ENCODE measurements at regions of chrX and their contacts with region 1.

Region 1: DNA sequence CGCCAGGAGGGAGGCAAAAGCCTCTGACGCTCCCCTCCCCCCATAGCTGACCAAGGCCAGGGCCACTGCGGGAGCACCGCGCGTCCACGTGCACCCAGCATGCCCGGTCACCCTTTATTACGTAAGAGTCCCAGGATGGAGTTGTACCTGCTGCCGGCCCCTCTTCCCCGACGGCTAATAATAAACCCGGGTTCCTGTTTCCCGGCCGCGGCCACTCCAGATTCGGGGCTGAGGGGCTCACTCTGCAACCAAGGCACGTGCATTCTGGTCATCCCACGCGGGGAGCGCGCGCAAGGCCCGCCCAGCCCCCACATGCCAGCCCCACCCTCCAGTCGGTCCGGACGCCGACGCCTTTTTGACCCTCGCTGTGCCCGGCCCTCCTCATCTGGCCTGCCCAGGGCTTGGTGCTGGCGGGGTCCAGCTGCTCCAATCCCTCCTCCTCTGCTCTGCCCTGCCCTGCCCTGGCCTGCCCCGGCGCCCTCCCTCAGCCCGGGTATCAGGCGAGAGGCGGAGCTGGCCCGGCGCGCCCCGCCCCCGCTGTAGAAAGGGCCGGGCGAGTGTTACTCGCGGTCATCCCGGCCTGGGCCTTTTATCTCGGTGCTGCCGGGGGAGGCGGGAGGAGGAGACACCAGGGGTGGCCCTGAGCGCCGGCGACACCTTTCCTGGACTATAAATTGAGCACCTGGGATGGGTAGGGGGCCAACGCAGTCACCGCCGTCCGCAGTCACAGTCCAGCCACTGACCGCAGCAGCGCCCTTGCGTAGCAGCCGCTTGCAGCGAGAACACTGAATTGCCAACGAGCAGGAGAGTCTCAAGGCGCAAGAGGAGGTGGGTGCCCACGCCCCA is 2.5 kb downstream of the MID1IP1 start:
- DNase-seq: peak; percentile 57 to 79
- H3K4me3 ChIP-seq: peak overlapping the region; percentile 74 to 95 (median 88)
- H3K27ac ChIP-seq: peak overlapping the region; percentile 86
- H3K4me1 ChIP-seq: peaks cover 0 to 3% (median 0%) of the 10 kb centered on the region in 4 experiments; a peak in 2 of 7 replicates
- H3K27me3 ChIP-seq: no peaks in the 10 kb centered on the region
- CTCF ChIP-seq: no peak
- EP300 ChIP-seq: peak in 1 of 2 experiments; percentile 59; a peak in 1 of 3 replicates
- POLR2A ChIP-seq: peak; percentile 70 to 93; a peak in 2 of 3 replicates
- RAD21 ChIP-seq: no peak

Region 2: GRCh38 chrX:38594434-38594833 is 209.4 kb before region 1 on chrX:
- CTCF ChIA-PET with region 1: no interaction called
- POLR2A ChIA-PET with region 1: no interaction called
- DNase-seq: no peak
- H3K4me3 ChIP-seq: no peak overlapping the region
- H3K27ac ChIP-seq: no peak overlapping the region
- H3K4me1 ChIP-seq: no peaks in the 10 kb centered on the region
- H3K27me3 ChIP-seq: no peaks in the 10 kb centered on the region
- CTCF ChIP-seq: no peak
- EP300 ChIP-seq: no peak
- POLR2A ChIP-seq: no peak
- RAD21 ChIP-seq: no peak

Region 3: GRCh38 chrX:38726597-38726996 is 77.2 kb before region 1 on chrX:
- CTCF ChIA-PET with region 1: no interaction called
- POLR2A ChIA-PET with region 1: no interaction called
- DNase-seq: no peak
- H3K4me3 ChIP-seq: no peak overlapping the region
- H3K27ac ChIP-seq: no peak overlapping the region
- H3K4me1 ChIP-seq: no peaks in the 10 kb centered on the region
- H3K27me3 ChIP-seq: no peaks in the 10 kb centered on the region
- CTCF ChIP-seq: no peak
- EP300 ChIP-seq: no peak
- POLR2A ChIP-seq: no peak
- RAD21 ChIP-seq: no peak

Region 4: DNA sequence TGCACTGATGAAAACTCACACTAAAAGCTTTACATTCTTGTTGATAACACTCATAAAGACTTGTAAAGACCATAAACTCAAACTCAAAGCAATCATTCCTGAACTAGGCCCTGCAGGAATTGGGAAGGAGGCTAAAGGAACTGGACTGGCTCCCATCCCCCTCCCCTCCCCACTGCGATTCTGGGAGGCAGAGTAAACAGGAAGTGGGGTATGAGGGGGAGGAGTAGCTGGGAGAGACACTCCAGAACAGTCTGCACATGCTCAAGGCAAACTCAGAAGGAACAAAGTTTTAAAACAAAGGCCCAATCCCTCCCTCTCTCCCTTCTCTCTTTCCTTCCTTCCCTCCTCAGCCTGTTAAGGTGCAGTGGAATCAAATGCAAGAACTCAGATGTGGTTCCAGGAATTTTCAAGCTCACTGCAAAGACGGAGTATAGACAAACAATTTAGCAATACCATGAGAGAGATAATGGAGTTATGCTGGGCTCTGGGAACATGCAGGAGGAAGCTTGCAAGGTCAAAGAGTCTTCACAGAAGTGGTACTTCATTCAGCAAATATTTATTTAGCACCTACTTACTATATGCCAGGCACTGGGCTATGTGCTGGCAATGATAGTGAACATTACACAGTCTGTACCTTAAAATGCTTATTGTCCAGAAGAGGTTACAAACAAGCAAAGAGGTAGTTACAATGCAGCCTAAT is 13.3 kb after region 1 on chrX:
- CTCF ChIA-PET with region 1: no interaction called
- POLR2A ChIA-PET with region 1: interaction called, 31 read pairs
- DNase-seq: no peak
- H3K4me3 ChIP-seq: no peak overlapping the region
- H3K27ac ChIP-seq: no peak overlapping the region
- H3K4me1 ChIP-seq: no peaks in the 10 kb centered on the region
- H3K27me3 ChIP-seq: no peaks in the 10 kb centered on the region
- CTCF ChIP-seq: no peak
- EP300 ChIP-seq: no peak
- POLR2A ChIP-seq: no peak
- RAD21 ChIP-seq: no peak

Region 5: DNA sequence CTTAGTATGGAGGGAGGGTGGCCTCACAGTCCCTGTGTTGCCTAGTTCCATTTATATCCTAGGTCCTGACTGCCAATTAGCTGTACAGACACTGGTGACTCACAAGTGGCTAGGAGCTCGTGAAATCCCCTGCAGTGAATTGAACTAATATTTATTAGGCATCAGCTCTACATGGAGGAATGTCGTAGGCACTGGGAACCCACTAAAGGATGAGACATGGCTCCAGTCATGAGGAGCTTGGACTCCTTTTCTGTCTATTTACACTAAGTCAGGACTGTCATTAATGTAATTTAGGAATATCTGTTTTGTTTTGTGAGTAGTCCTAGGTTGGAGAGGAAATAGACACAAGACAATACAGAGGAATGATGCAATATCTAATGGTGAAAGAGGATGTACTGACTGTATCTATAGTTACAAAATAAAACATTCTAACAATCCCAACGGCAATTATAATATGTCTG is 65.2 kb after region 1 on chrX:
- CTCF ChIA-PET with region 1: interaction called, 4 read pairs
- POLR2A ChIA-PET with region 1: interaction called, 64 read pairs
- DNase-seq: no peak
- H3K4me3 ChIP-seq: no peak overlapping the region
- H3K27ac ChIP-seq: no peak overlapping the region
- H3K4me1 ChIP-seq: peaks cover 3 to 15% (median 13%) of the 10 kb centered on the region in 4 experiments; a peak in 6 of 7 replicates
- H3K27me3 ChIP-seq: no peaks in the 10 kb centered on the region
- CTCF ChIP-seq: no peak
- EP300 ChIP-seq: no peak
- POLR2A ChIP-seq: no peak
- RAD21 ChIP-seq: no peak

Region 6: DNA sequence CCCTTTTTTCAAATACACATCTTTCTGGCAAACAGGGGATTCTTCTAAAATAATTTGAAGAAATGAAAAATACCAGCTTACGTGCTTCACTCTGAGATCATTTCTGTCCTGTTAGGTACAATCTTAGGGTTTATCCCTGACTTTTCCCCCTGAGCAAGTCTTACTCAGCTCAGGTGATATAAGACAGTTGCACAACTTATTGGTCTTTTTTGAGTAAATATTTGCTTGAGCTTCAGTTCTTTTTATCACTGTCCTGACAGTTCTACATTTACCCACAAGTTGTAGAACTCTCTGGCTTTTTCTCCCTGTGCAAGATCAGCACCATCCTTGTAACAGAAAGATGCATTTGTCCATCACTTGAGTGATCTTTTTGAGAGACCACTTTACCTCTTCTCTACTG is 82.3 kb after region 1 on chrX:
- CTCF ChIA-PET with region 1: no interaction called
- POLR2A ChIA-PET with region 1: no interaction called
- DNase-seq: no peak
- H3K4me3 ChIP-seq: no peak overlapping the region
- H3K27ac ChIP-seq: no peak overlapping the region
- H3K4me1 ChIP-seq: no peaks in the 10 kb centered on the region
- H3K27me3 ChIP-seq: no peaks in the 10 kb centered on the region
- CTCF ChIP-seq: no peak
- EP300 ChIP-seq: no peak
- POLR2A ChIP-seq: no peak
- RAD21 ChIP-seq: no peak

Measured in H1 (cell line).